Ovary (tissue), 10 donors: ENCODE measurements at regions of chr6 and their contacts with region 1.

Region 1: DNA sequence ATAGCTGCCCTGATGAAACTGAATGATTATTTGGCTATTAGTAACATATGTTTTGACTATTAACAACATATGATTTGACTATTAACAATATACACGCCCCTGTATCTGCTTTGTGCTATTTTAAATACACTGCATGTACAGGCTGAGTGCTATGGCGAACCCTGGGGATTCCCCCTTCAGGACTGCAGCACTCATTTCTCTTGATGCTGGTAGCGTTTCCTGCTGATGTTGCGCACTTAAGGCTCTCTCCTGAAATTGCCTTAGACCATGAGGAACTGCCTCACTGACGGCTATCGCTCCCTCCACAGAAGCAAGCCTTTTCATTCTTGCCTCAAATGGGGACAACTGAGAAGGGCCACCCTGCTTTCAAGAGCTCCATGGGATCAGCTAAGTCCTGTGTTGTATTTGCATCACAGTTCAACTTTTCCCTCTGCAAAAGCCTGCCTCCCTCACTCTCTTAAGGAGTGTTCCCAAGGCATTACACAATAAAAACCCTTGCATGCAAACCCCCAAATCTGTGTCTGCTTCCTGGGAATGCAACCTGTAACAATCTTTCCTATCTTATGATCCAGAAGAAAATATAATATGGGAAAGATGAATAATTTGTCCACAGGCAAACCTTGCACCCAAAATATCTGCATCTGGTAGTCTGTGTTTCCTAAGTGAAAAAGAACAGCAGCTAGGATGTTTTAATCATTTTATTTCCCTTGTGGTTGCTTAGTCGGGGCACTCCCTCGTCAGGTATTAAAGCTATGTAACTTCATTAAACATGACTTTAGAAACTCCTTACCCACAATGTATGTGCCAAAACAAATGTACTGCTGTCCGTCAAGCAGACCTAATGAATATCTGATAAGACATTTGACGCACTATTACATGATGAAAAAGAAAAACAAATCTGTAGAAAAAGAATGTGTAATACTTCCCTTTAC is 456.4 kb downstream of the COL12A1 start:
- DNase-seq: no peak
- H3K4me3 ChIP-seq: no peak overlapping the region
- H3K27ac ChIP-seq: no peak overlapping the region
- H3K4me1 ChIP-seq: no peaks in the 10 kb centered on the region
- H3K27me3 ChIP-seq: no peaks in the 10 kb centered on the region
- CTCF ChIP-seq: no peak
- EP300 ChIP-seq: no peak
- POLR2A ChIP-seq: no peak

Region 2: DNA sequence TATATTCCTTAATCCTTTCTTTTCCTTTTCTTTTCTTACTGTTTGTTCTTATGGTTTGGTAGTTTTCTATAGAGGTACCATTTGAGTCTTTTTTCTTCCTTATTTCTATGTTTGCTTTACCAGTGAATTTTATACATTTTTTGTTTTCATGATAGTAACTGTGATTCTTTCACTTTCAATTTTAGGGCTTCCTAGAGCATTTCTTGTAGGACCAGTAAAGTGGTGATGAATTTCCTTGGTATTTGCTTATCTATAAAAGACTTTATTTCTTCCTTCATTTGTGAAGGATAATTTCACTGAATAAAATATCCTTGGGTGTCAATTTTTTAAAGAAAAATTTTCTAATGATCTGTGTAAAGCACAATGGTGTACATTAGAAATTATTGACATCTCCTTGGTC is 416.1 kb before region 1 on chr6:
- intact Hi-C with region 1: no loop called
- DNase-seq: no peak
- H3K4me3 ChIP-seq: no peak overlapping the region
- H3K27ac ChIP-seq: no peak overlapping the region
- H3K4me1 ChIP-seq: no peaks in the 10 kb centered on the region
- H3K27me3 ChIP-seq: no peaks in the 10 kb centered on the region
- CTCF ChIP-seq: no peak
- EP300 ChIP-seq: no peak
- POLR2A ChIP-seq: no peak

Region 3: DNA sequence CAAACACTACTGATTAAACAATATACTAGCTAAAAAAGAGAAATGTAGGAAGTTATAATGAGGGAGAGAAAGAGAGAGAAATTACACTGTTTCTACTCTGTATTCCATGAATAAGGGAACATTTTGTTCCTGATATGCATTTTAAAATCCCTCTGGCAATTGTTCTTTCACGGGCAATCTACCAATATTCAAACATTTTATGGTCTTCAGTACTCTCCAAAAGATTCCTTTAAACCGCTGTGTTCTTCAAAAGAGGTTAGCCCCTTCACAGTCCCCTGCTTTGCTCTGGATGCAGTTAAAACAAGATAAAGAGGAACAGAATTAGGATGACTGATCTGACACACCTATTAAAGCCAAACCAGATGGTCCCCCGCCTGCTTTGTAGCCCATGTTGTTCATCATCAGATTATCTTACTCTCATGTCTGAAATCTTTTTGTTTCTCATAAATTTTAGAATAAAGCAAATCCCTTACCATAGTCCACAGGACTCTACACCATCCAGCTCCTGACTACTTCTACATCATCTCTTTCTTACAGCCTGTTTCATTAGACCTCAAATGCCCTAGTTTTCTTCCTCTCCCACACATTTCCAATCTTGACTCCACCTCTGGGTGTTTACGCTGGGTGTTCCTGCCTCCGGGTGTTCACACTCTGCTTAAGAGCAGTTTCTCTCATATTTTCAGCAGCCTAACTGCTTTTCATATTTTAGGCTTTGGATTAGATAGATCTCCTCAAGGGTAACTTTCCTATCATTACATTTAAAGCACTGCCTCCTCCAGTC is 56.6 kb after region 1 on chr6:
- intact Hi-C with region 1: loop called in 1 of 4 experiments (anchors 10 kb)
- DNase-seq: peak; percentile 30 to 64 (median 53)
- H3K4me3 ChIP-seq: no peak overlapping the region
- H3K27ac ChIP-seq: peak overlapping the region; percentile 31 to 58
- H3K4me1 ChIP-seq: no peaks in the 10 kb centered on the region
- H3K27me3 ChIP-seq: no peaks in the 10 kb centered on the region
- CTCF ChIP-seq: no peak
- EP300 ChIP-seq: no peak
- POLR2A ChIP-seq: no peak